Naive thymus-derived CD4-positive, alpha-beta T cell (primary cell): ENCODE measurements at regions of chr7 and their contacts with region 1.

Region 1: DNA sequence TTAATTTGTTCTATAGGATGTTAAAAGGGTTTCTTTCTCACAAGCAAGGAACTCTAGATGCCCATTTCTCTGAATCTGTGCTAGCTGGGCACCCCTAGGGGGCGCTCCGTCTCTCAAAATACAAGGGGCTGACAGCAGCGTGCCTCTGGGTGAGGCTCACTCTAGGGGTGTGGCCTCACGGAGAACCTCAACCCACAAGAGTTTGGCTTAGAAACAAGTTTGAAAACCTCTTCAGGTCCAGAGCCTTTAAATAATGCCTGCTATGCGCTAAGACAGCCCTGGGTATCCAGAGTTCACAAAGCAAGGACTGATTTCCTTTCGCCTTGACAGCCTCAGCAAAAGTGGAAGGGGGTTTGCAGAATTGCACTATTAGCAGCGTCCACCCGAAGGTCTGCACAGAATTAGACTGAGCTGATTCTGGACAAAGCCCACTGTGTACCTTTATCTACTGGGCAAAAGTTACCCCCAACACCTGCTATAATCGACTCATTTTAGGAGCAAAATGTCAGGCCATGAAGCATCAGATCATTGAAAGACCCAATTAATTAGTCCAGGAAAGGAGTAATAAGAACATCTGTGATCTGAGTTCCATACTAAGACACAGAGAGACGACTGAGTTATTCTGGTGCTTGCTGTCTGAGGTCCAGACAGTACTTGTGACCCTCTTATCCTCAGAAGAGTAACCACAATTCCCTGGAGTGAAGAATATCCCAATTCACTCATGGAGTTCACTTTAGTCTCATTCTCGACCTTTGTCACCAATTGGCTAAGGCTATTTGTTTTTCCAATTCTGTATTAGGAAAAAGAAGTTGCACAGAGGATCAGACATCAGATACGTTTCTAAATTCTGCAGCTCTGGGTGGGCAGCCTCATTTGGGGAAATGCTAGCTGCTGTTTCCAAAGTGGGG is 574 bp upstream of the CPED1 start:
- DNase-seq: peak; percentile 73 to 88 (median 84)
- ATAC-seq: peak; percentile 100
- H3K4me3 ChIP-seq: peak overlapping the region; percentile 33
- H3K4me3 Mint-ChIP-seq: peak overlapping the region; percentile 68 to 83 (median 80)
- H3K27ac ChIP-seq: no peak overlapping the region
- H3K27ac Mint-ChIP-seq: no peak overlapping the region
- H3K4me1 ChIP-seq: peaks cover 12 to 14% of the 10 kb centered on the region in 2 donors
- H3K4me1 Mint-ChIP-seq: peaks cover 7 to 24% (median 21%) of the 10 kb centered on the region in 7 donors
- H3K27me3 ChIP-seq: peaks cover 14 to 23% of the 10 kb centered on the region in 2 donors
- H3K27me3 Mint-ChIP-seq: peaks cover 46 to 66% (median 56%) of the 10 kb centered on the region in 5 donors

Region 2: GRCh38 chr7:120799813-120800475 is 188.0 kb before region 1 on chr7:
- CTCF ChIA-PET with region 1: no interaction called
- POLR2A ChIA-PET with region 1: no interaction called
- intact Hi-C with region 1: loop called in 1 of 2 experiments (anchors 5 kb)
- DNase-seq: no peak
- ATAC-seq: no peak
- H3K4me3 ChIP-seq: no peak overlapping the region
- H3K4me3 Mint-ChIP-seq: no peak overlapping the region
- H3K27ac ChIP-seq: no peak overlapping the region
- H3K27ac Mint-ChIP-seq: no peak overlapping the region
- H3K4me1 ChIP-seq: no peaks in the 10 kb centered on the region
- H3K4me1 Mint-ChIP-seq: no peaks in the 10 kb centered on the region
- H3K27me3 ChIP-seq: no peaks in the 10 kb centered on the region
- H3K27me3 Mint-ChIP-seq: peaks cover 0 to 9% (median 5%) of the 10 kb centered on the region in 5 donors

Region 3: GRCh38 chr7:120857588-120858573 is 130.1 kb before region 1 on chr7 and contains the start of gene TSPAN12:
- CTCF ChIA-PET with region 1: no interaction called
- POLR2A ChIA-PET with region 1: no interaction called
- intact Hi-C with region 1: loop called in 1 of 2 experiments (anchors 5 kb)
- DNase-seq: peak in 7 of 9 donors; percentile 11 to 64 (median 28)
- ATAC-seq: peak; percentile 89
- H3K4me3 ChIP-seq: peak within 1 kb of the TSS; percentile 52
- H3K4me3 Mint-ChIP-seq: peak within 1 kb of the TSS; percentile 82 to 90 (median 86)
- H3K27ac ChIP-seq: no peak within 1 kb of the TSS
- H3K27ac Mint-ChIP-seq: no peak within 1 kb of the TSS
- H3K4me1 ChIP-seq: peaks cover 0 to 8% of the 10 kb centered on the region in 2 donors
- H3K4me1 Mint-ChIP-seq: peaks cover 10 to 13% (median 12%) of the 10 kb centered on the region in 7 donors
- H3K27me3 ChIP-seq: peaks cover 13 to 15% of the 10 kb centered on the region in 2 donors
- H3K27me3 Mint-ChIP-seq: peaks cover 51 to 71% (median 66%) of the 10 kb centered on the region in 5 donors
- total RNA-seq, gene TSPAN12: not detected

Region 4: DNA sequence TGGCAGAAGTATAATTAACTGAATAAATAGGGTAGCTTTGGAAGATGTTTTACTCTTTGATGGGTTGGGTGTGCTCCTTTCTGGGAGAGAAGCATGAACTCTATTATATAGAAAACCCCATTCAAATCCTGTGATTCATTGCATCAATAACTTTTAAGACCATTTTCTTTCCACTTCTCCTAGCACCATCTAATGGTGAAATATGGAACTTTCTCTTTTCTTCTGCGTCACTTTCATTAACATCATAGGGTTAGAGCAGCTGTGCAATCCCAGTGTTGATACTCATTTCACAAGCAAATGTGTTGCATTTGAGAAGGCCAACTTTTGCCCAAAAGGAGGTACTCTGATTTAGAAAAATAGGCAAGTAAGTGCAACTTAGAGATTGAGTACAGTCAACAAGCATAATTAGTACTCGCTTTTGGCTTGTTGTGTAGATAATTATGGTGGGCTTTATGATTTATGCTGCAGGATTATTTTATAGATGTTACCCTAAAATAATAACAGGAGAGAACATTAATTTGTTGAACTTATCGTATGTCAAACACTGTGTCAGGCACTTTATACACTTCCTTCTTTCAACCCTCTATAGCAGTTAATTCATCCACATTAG is 93.5 kb after region 1 on chr7:
- CTCF ChIA-PET with region 1: interaction called, 69 read pairs
- POLR2A ChIA-PET with region 1: no interaction called
- intact Hi-C with region 1: loop called (anchors 1 kb)
- DNase-seq: peak in 7 of 9 donors; percentile 19 to 63 (median 47)
- ATAC-seq: peak; percentile 88
- H3K4me3 ChIP-seq: no peak overlapping the region
- H3K4me3 Mint-ChIP-seq: no peak overlapping the region
- H3K27ac ChIP-seq: no peak overlapping the region
- H3K27ac Mint-ChIP-seq: no peak overlapping the region
- H3K4me1 ChIP-seq: no peaks in the 10 kb centered on the region
- H3K4me1 Mint-ChIP-seq: no peaks in the 10 kb centered on the region
- H3K27me3 ChIP-seq: no peaks in the 10 kb centered on the region
- H3K27me3 Mint-ChIP-seq: peaks cover 5 to 26% (median 12%) of the 10 kb centered on the region in 5 donors

Region 5: GRCh38 chr7:121366852-121367431 is 379.0 kb after region 1 on chr7:
- CTCF ChIA-PET with region 1: no interaction called
- POLR2A ChIA-PET with region 1: no interaction called
- intact Hi-C with region 1: loop called (anchors 10 kb)
- DNase-seq: peak in 6 of 9 donors; percentile 26 to 61 (median 57)
- ATAC-seq: peak; percentile 67
- H3K4me3 ChIP-seq: no peak overlapping the region
- H3K4me3 Mint-ChIP-seq: no peak overlapping the region
- H3K27ac ChIP-seq: no peak overlapping the region
- H3K27ac Mint-ChIP-seq: peak overlapping the region in 3 of 9 donors; percentile 45 to 69 (median 47)
- H3K4me1 ChIP-seq: no peaks in the 10 kb centered on the region
- H3K4me1 Mint-ChIP-seq: peaks cover 0 to 39% (median 4%) of the 10 kb centered on the region in 7 donors
- H3K27me3 ChIP-seq: no peaks in the 10 kb centered on the region
- H3K27me3 Mint-ChIP-seq: no peaks in the 10 kb centered on the region

Region 6: GRCh38 chr7:121994625-121995410 is 1006.9 kb after region 1 on chr7:
- CTCF ChIA-PET with region 1: no interaction called
- POLR2A ChIA-PET with region 1: no interaction called
- intact Hi-C with region 1: loop called (anchors 2 to 10 kb)
- DNase-seq: peak in 2 of 9 donors; percentile 5 to 36
- ATAC-seq: peak; percentile 68
- H3K4me3 ChIP-seq: no peak overlapping the region
- H3K4me3 Mint-ChIP-seq: no peak overlapping the region
- H3K27ac ChIP-seq: no peak overlapping the region
- H3K27ac Mint-ChIP-seq: no peak overlapping the region
- H3K4me1 ChIP-seq: no peaks in the 10 kb centered on the region
- H3K4me1 Mint-ChIP-seq: peaks cover 0 to 2% (median 0%) of the 10 kb centered on the region in 7 donors
- H3K27me3 ChIP-seq: no peaks in the 10 kb centered on the region
- H3K27me3 Mint-ChIP-seq: peaks cover 0 to 4% (median 0%) of the 10 kb centered on the region in 5 donors

Region 7: GRCh38 chr7:122412883-122413282 is 1424.9 kb after region 1 on chr7:
- CTCF ChIA-PET with region 1: no interaction called
- POLR2A ChIA-PET with region 1: no interaction called
- intact Hi-C with region 1: no loop called
- DNase-seq: no peak
- ATAC-seq: no peak
- H3K4me3 ChIP-seq: no peak overlapping the region
- H3K4me3 Mint-ChIP-seq: no peak overlapping the region
- H3K27ac ChIP-seq: no peak overlapping the region
- H3K27ac Mint-ChIP-seq: no peak overlapping the region
- H3K4me1 ChIP-seq: no peaks in the 10 kb centered on the region
- H3K4me1 Mint-ChIP-seq: no peaks in the 10 kb centered on the region
- H3K27me3 ChIP-seq: no peaks in the 10 kb centered on the region
- H3K27me3 Mint-ChIP-seq: no peaks in the 10 kb centered on the region